Calu3 (cell line): ENCODE measurements at regions of chr3 and their contacts with region 1.

Region 1: GRCh38 chr3:166902374-166902773 is 477.7 kb downstream of the ZBBX start:
- DNase-seq: no peak
- H3K4me3 Mint-ChIP-seq: no peak overlapping the region
- H3K27ac Mint-ChIP-seq: no peak overlapping the region
- H3K4me1 Mint-ChIP-seq: no peaks in the 10 kb centered on the region
- H3K27me3 Mint-ChIP-seq: no peaks in the 10 kb centered on the region
- CTCF ChIP-seq: no peak

Region 2: DNA sequence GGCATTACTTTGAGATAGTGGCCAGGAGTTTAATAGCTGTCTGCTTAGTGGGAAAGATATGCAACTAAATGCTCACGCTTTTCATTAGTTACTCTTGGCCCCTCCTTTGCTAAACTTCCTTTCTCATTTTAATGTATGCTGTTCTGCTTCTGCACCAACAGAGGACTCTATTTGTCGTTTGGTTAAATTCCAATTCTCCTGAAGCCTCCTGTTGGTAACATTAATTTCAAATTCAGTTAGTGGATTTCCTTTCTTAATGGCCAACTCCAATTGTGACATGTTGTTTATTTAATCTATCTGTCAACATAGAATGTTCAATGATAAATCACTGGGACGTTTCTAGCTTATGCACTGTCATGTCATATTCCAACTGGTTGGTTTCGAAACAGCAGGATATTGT is 597.8 kb before region 1 on chr3:
- CTCF ChIA-PET with region 1: no interaction called
- intact Hi-C with region 1: loop called (anchors 10 kb)
- DNase-seq: no peak
- H3K4me3 Mint-ChIP-seq: no peak overlapping the region
- H3K27ac Mint-ChIP-seq: no peak overlapping the region
- H3K4me1 Mint-ChIP-seq: peaks cover 9% of the 10 kb centered on the region
- H3K27me3 Mint-ChIP-seq: no peaks in the 10 kb centered on the region
- CTCF ChIP-seq: no peak

Region 3: GRCh38 chr3:166554023-166554422 is 348.4 kb before region 1 on chr3:
- CTCF ChIA-PET with region 1: no interaction called
- intact Hi-C with region 1: loop called (anchors 5 kb)
- DNase-seq: no peak
- H3K4me3 Mint-ChIP-seq: no peak overlapping the region
- H3K27ac Mint-ChIP-seq: no peak overlapping the region
- H3K4me1 Mint-ChIP-seq: no peaks in the 10 kb centered on the region
- H3K27me3 Mint-ChIP-seq: no peaks in the 10 kb centered on the region
- CTCF ChIP-seq: no peak

Region 4: GRCh38 chr3:166706094-166706493 is 196.3 kb before region 1 on chr3:
- CTCF ChIA-PET with region 1: no interaction called
- intact Hi-C with region 1: no loop called
- DNase-seq: no peak
- H3K4me3 Mint-ChIP-seq: no peak overlapping the region
- H3K27ac Mint-ChIP-seq: no peak overlapping the region
- H3K4me1 Mint-ChIP-seq: no peaks in the 10 kb centered on the region
- H3K27me3 Mint-ChIP-seq: no peaks in the 10 kb centered on the region
- CTCF ChIP-seq: no peak